CD4-positive, alpha-beta memory T cell (primary cell): ENCODE measurements at regions of chr6 and their contacts with region 1.

Region 1: GRCh38 chr6:113858480-113859348 is 1.6 kb downstream of the MARCKS start:
- DNase-seq: peak; percentile 56 to 73 (median 70)
- H3K4me3 ChIP-seq: peak overlapping the region; percentile 31 to 55
- H3K4me3 Mint-ChIP-seq: peak overlapping the region; percentile 29 to 85 (median 64)
- H3K27ac ChIP-seq: no peak overlapping the region
- H3K27ac Mint-ChIP-seq: peak overlapping the region in 1 of 7 donors; percentile 59
- H3K4me1 ChIP-seq: peaks cover 41% of the 10 kb centered on the region
- H3K4me1 Mint-ChIP-seq: peaks cover 0 to 20% (median 12%) of the 10 kb centered on the region in 4 donors
- H3K27me3 ChIP-seq: peaks cover 39% of the 10 kb centered on the region
- H3K27me3 Mint-ChIP-seq: peaks cover 33 to 35% of the 10 kb centered on the region in 2 donors

Region 2: GRCh38 chr6:113842153-113842552 is 16.6 kb before region 1 on chr6:
- CTCF ChIA-PET with region 1: no interaction called
- POLR2A ChIA-PET with region 1: no interaction called
- intact Hi-C with region 1: no loop called
- DNase-seq: no peak
- H3K4me3 ChIP-seq: no peak overlapping the region
- H3K4me3 Mint-ChIP-seq: no peak overlapping the region
- H3K27ac ChIP-seq: no peak overlapping the region
- H3K27ac Mint-ChIP-seq: no peak overlapping the region
- H3K4me1 ChIP-seq: no peaks in the 10 kb centered on the region
- H3K4me1 Mint-ChIP-seq: no peaks in the 10 kb centered on the region
- H3K27me3 ChIP-seq: no peaks in the 10 kb centered on the region
- H3K27me3 Mint-ChIP-seq: peaks cover 8 to 13% of the 10 kb centered on the region in 2 donors

Region 3: DNA sequence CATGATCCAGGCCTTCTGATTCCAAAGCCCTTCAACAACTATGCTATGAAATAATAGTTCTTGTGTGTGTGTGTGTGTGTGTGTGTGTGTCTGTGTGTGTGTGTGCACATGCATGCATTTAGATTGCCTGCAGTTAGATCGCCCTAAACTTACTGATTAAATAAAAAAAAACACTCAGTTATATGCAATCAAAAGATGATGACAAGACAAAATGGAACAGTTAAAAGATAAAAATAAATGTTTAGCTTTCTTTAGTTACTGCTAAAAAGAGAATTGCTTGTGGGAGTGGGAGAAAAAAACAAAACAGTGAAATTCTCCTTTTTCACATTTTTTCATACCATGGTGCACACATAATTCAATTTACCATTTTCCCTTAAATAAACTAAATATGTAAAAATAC is 27.8 kb after region 1 on chr6:
- CTCF ChIA-PET with region 1: no interaction called
- POLR2A ChIA-PET with region 1: no interaction called
- intact Hi-C with region 1: no loop called
- DNase-seq: no peak
- H3K4me3 ChIP-seq: no peak overlapping the region
- H3K4me3 Mint-ChIP-seq: no peak overlapping the region
- H3K27ac ChIP-seq: no peak overlapping the region
- H3K27ac Mint-ChIP-seq: no peak overlapping the region
- H3K4me1 ChIP-seq: no peaks in the 10 kb centered on the region
- H3K4me1 Mint-ChIP-seq: no peaks in the 10 kb centered on the region
- H3K27me3 ChIP-seq: no peaks in the 10 kb centered on the region
- H3K27me3 Mint-ChIP-seq: peaks cover 6 to 14% of the 10 kb centered on the region in 2 donors

Region 4: DNA sequence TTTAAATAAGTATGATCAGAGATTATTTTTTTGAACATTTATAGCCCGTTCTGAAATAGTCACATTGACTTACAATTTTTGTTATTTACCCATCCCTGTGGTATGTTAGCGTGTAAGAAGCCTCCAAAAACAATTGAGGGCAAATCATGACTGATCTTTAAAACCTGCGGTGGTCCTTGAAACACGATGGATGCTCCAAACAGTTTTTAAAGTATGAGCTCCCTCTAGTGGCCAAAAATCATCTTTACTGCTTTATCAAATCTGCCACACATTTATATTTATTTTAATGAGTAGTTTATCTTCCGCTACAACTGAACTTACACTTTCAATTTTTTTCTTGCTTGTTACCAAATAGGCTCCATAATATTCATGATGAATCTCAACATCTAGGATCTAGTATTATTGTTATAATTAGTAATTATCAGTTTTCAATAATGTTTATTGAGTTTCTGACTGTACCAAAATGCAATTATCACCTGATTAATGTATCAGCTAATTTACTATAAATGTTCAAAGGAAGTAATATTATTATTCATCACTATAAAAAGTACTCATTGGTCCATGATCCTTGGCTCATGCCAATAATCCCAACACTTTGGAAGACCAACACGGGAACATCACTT is 50.6 kb after region 1 on chr6:
- CTCF ChIA-PET with region 1: no interaction called
- POLR2A ChIA-PET with region 1: no interaction called
- intact Hi-C with region 1: no loop called
- DNase-seq: peak in 4 of 5 donors; percentile 23 to 38 (median 31)
- H3K4me3 ChIP-seq: no peak overlapping the region
- H3K4me3 Mint-ChIP-seq: peak overlapping the region in 1 of 8 donors; percentile 45
- H3K27ac ChIP-seq: no peak overlapping the region
- H3K27ac Mint-ChIP-seq: no peak overlapping the region
- H3K4me1 ChIP-seq: no peaks in the 10 kb centered on the region
- H3K4me1 Mint-ChIP-seq: peaks cover 0 to 4% (median 3%) of the 10 kb centered on the region in 4 donors
- H3K27me3 ChIP-seq: no peaks in the 10 kb centered on the region
- H3K27me3 Mint-ChIP-seq: peaks cover 5 to 6% of the 10 kb centered on the region in 2 donors

Region 5: DNA sequence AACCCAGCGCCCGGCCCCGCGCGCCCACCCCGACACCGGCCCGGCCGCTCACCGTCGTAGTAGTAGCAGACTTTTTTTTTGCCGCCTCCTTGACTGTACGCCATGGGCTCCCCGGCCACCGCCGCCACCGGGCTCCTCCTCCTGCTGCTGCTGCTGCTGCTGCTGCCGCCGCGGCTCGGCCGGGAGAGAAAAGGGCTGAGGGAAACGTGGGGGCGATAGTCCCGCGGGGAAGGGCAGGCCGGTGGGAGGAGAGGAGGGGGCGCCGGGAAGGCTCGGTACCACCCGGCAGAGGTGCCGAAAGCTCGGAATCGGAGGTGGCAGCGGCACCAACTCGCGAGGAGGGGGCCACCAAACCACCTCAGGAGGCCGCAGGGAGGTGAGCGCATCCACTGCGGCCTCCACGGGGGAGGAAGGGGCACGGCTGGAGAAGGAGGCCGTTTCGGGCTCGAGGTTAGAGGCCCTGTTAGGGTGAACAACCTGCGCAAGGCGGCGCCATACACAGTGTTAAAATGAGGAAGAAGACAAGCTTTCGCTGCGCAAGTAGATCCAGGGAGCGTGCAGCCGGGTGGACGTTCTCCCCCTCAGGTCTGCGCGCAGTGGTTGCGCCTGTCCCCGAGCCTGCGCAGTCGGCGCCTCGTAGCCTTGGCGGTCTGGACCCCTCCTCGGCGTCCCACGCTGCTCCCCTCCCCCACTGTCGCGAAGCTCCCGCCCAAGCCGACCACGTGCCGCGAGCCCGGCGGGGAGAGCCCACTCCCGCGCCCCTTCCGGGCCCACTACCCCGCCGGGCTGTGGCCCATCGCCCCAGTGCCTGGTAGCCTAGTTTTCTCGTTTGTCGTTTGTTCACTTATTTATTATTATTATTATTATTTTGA is 112.3 kb after region 1 on chr6 and contains the start of gene HDAC2:
- CTCF ChIA-PET with region 1: no interaction called
- POLR2A ChIA-PET with region 1: no interaction called
- intact Hi-C with region 1: loop called (anchors 5 kb)
- DNase-seq: peak; percentile 83 to 88 (median 86)
- H3K4me3 ChIP-seq: peak within 1 kb of the TSS; percentile 55 to 91
- H3K4me3 Mint-ChIP-seq: peak within 1 kb of the TSS; percentile 93 to 99 (median 98)
- H3K27ac ChIP-seq: peak within 1 kb of the TSS; percentile 82
- H3K27ac Mint-ChIP-seq: peak within 1 kb of the TSS; percentile 90 to 98 (median 96)
- H3K4me1 ChIP-seq: peaks cover 39% of the 10 kb centered on the region
- H3K4me1 Mint-ChIP-seq: peaks cover 23 to 45% (median 33%) of the 10 kb centered on the region in 4 donors
- H3K27me3 ChIP-seq: no peaks in the 10 kb centered on the region
- H3K27me3 Mint-ChIP-seq: peaks cover under 1% of the 10 kb centered on the region in 2 donors
- total RNA-seq, gene HDAC2: 53.0 to 54.7 TPM